ENCODE measurements at regions of chr17 and their contacts with region 1.

Region 1: GRCh38 chr17:8118769-8119580 is 661 bp upstream of the ALOXE3 start:
- DNase-seq: peak; percentile 77 to 91 (median 84)
- H3K4me3 ChIP-seq: peak overlapping the region; percentile 99
- H3K4me3 Mint-ChIP-seq: peak overlapping the region; percentile 84 to 98 (median 94)
- H3K27ac ChIP-seq: peak overlapping the region; percentile 41
- H3K27ac Mint-ChIP-seq: peak overlapping the region; percentile 77 to 100 (median 94)
- H3K4me1 ChIP-seq: peaks cover 50% of the 10 kb centered on the region
- H3K4me1 Mint-ChIP-seq: peaks cover 46 to 61% (median 60%) of the 10 kb centered on the region in 3 donors
- H3K27me3 ChIP-seq: peaks cover 27% of the 10 kb centered on the region
- H3K27me3 Mint-ChIP-seq: peaks cover 46 to 55% of the 10 kb centered on the region in 2 donors

Region 2: GRCh38 chr17:8079291-8080207 is 39.4 kb before region 1 on chr17:
- CTCF ChIA-PET with region 1: interaction called, 22 read pairs
- POLR2A ChIA-PET with region 1: no interaction called
- DNase-seq: peak; percentile 68 to 85 (median 72)
- H3K4me3 ChIP-seq: peak overlapping the region; percentile 78
- H3K4me3 Mint-ChIP-seq: peak overlapping the region; percentile 70 to 95 (median 92)
- H3K27ac ChIP-seq: peak overlapping the region; percentile 57
- H3K27ac Mint-ChIP-seq: peak overlapping the region; percentile 24 to 92 (median 84)
- H3K4me1 ChIP-seq: peaks cover 15% of the 10 kb centered on the region
- H3K4me1 Mint-ChIP-seq: peaks cover 4 to 20% (median 16%) of the 10 kb centered on the region in 3 donors
- H3K27me3 ChIP-seq: peaks cover 8% of the 10 kb centered on the region
- H3K27me3 Mint-ChIP-seq: peaks cover 7 to 10% of the 10 kb centered on the region in 2 donors

Region 3: DNA sequence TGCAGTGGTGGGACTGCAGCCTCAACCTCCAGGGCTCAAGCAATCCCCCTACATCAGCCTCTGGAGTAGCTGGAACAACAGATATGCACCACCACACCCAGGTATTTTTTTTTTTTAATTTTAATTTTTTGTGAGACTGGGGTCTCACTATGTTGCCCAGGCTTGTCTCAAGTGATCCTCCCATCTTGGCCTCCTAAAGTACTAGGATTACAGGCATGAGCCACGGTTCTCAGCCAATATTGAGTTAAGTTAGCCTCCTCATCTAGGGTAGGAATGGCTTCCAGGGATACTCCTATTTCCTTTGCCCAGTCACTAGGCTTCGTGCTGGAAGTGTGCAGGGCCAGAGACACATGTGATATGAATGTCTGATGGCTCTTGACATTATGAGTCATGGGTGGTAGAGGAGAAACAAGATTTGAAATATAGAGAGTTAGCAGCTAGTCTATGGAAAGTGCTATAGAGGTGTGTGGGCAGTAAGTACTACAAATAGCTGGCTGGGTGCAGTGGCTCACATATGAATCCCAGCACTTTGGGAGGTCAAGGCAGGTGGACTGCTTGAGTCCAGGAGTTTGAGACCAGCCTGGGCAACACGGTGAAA is 13.0 kb after region 1 on chr17:
- CTCF ChIA-PET with region 1: interaction called, 52 read pairs
- POLR2A ChIA-PET with region 1: interaction called, 4 read pairs
- DNase-seq: no peak
- H3K4me3 ChIP-seq: no peak overlapping the region
- H3K4me3 Mint-ChIP-seq: peak overlapping the region in 2 of 7 donors; percentile 4 to 61
- H3K27ac ChIP-seq: no peak overlapping the region
- H3K27ac Mint-ChIP-seq: no peak overlapping the region
- H3K4me1 ChIP-seq: peaks cover 3% of the 10 kb centered on the region
- H3K4me1 Mint-ChIP-seq: peaks cover 4 to 5% (median 5%) of the 10 kb centered on the region in 3 donors
- H3K27me3 ChIP-seq: no peaks in the 10 kb centered on the region
- H3K27me3 Mint-ChIP-seq: peaks cover 0 to 8% of the 10 kb centered on the region in 2 donors

Region 4: GRCh38 chr17:8156246-8156992 is 37.4 kb after region 1 on chr17:
- CTCF ChIA-PET with region 1: interaction called, 23 read pairs
- POLR2A ChIA-PET with region 1: interaction called, 19 read pairs
- DNase-seq: peak; percentile 100
- H3K4me3 ChIP-seq: peak overlapping the region; percentile 100
- H3K4me3 Mint-ChIP-seq: no peak overlapping the region
- H3K27ac ChIP-seq: peak overlapping the region; percentile 100
- H3K27ac Mint-ChIP-seq: no peak overlapping the region
- H3K4me1 ChIP-seq: peaks cover 77% of the 10 kb centered on the region
- H3K4me1 Mint-ChIP-seq: peaks cover 32 to 73% (median 48%) of the 10 kb centered on the region in 3 donors
- H3K27me3 ChIP-seq: no peaks in the 10 kb centered on the region
- H3K27me3 Mint-ChIP-seq: peaks cover 0 to 14% of the 10 kb centered on the region in 2 donors

Region 5: DNA sequence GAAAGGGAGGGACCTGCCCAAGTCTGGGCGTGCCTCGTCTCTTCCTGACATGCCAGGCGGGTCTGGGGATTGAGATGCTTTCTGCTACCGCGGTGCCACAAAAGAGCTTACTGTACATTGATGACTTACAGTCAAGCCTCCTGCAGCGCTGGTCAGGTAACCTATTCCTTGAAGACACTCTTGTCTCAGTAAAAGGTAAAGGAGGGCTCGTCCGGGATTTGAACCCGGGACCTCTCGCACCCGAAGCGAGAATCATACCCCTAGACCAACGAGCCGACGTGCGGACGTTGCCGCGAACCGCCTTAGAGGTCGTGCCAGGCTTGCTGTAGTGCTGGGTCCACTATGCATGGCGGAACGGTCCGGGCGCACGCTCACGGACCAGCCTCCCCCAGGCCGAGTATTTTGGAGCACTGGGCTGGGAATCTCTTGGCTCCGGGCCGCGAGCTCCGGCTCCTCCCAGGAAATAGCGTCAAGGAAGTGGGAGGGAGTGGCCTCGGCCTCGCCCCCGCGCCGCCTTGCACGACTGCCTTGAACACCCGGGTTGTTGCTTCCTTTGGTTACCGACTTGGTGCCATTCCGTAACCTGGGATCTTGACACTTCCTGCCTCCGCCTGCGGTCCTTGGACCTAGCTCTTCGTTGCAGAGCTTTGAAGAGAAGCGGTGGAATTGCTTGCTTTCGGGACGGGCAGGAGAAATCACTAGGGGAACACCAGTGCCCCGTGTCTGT is 103.8 kb after region 1 on chr17:
- CTCF ChIA-PET with region 1: interaction called, 27 read pairs
- POLR2A ChIA-PET with region 1: interaction called, 37 read pairs
- DNase-seq: peak; percentile 80 to 92 (median 87)
- H3K4me3 ChIP-seq: peak overlapping the region; percentile 98
- H3K4me3 Mint-ChIP-seq: peak overlapping the region; percentile 86 to 98 (median 97)
- H3K27ac ChIP-seq: peak overlapping the region; percentile 86
- H3K27ac Mint-ChIP-seq: peak overlapping the region; percentile 94 to 100 (median 96)
- H3K4me1 ChIP-seq: peaks cover 41% of the 10 kb centered on the region
- H3K4me1 Mint-ChIP-seq: peaks cover 64 to 83% (median 79%) of the 10 kb centered on the region in 3 donors
- H3K27me3 ChIP-seq: no peaks in the 10 kb centered on the region
- H3K27me3 Mint-ChIP-seq: peaks cover 0 to 31% of the 10 kb centered on the region in 2 donors